ENCODE measurements at regions of chr14 and their contacts with region 1.

Region 1: DNA sequence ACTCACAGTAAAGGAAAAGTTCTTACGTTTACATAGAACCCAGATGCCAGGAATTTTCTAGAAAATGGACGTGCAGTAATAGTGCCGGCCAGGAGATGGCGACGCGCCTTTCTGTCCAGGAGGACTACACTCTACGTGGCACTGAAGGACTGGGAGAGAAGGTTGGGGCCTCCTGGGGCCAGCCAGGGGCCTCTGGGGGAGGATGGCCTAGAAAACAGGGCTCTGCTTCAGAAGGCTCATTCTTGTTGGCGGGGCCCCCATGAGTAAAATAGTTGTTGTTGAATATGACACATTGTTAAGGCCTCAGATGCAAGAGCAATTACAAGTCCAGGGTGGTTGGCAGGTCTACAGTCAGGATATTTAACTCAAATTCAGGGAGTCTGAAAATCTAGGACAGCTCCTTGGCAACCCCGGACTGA is 120.1 kb upstream of the MAX start:
- DNase-seq: peak; percentile 87
- H3K4me3 ChIP-seq: no peak overlapping the region
- H3K27ac ChIP-seq: peak overlapping the region; percentile 61
- H3K4me1 ChIP-seq: peaks cover 32% of the 10 kb centered on the region
- H3K27me3 ChIP-seq: no peaks in the 10 kb centered on the region

Region 2: GRCh38 chr14:65403231-65403630 is 180.8 kb after region 1 on chr14:
- in situ Hi-C with region 1: loop called (anchors 10 kb)
- DNase-seq: peak; percentile 91
- H3K4me3 ChIP-seq: no peak overlapping the region
- H3K27ac ChIP-seq: peak overlapping the region; percentile 59
- H3K4me1 ChIP-seq: peaks cover 9% of the 10 kb centered on the region
- H3K27me3 ChIP-seq: no peaks in the 10 kb centered on the region

Measured in GM23248 (cell line).